ENCODE measurements at regions of chr2 and their contacts with region 1.

Region 1: DNA sequence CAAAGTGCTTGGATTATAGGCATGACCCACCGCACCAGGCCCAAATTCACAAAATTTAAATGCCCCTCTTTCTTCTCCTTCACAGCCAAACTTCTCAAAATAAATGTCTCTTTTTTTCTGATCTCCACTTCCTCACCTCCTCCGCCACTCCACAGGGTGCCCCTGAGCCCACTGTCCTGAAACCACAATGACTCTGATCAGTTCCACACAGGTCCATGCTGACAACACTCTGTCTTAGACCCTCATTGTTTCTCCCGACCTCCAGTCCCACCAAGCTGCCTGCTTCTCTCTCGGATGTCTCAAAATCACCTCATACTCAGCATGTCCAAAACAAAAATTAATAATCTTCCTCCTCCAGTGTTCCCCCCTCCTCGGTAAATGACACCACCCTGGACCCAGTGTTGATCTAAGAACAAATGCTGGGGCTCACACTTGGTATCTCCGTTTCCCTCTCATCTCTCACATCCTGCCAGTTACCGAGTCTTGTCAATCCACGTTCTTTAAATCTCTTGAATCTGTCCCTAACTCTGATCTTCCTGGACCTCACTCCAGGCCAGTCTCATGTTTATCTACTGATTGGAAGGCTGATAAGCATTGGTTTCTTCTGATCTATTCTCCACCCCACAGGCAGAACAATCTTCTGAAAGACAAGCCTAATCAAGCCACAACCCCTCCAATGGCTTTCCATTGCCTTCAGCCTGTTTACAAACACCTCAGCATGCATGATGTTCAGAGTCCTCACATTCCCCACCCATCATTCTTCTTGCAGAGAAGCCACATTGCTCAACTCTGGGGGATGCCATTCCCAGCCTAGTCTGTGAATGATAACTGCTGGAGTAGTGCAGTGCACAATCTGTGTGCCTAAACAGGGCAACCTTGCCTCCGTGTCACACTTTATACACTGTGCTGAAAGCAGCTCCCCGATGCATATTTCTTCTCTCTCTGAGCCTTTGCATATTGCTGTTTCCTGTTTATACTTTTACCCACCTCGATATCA is 12.4 kb upstream of the ANKRD44 start:
- DNase-seq: no peak
- ATAC-seq: peak; percentile 52
- H3K4me3 ChIP-seq: peak overlapping the region; percentile 32; the same call in 1 of the 2 replicates
- H3K27ac ChIP-seq: 0 out of 2 replicates have a peak overlapping the region, but pooled peaks have one; percentile 7
- H3K4me1 ChIP-seq: peaks cover 18% of the 10 kb centered on the region; the same call in 1 of the 2 replicates
- H3K27me3 ChIP-seq: no peaks in the 10 kb centered on the region
- CTCF ChIP-seq: no peak
- EP300 ChIP-seq: no peak
- POLR2A ChIP-seq: peak; percentile 51
- RAD21 ChIP-seq: no peak

Region 2: GRCh38 chr2:197360744-197361156 is 37.7 kb after region 1 on chr2:
- CTCF ChIA-PET with region 1: no interaction called
- POLR2A ChIA-PET with region 1: interaction called, 4 read pairs
- RAD21 ChIA-PET with region 1: no interaction called
- SMC1A ChIA-PET with region 1: interaction called, 4 read pairs
- in situ Hi-C with region 1: no loop called
- intact Hi-C with region 1: loop called (anchors 5 kb)
- DNase-seq: no peak
- ATAC-seq: peak; percentile 89
- H3K4me3 ChIP-seq: no peak overlapping the region
- H3K27ac ChIP-seq: no peak overlapping the region
- H3K4me1 ChIP-seq: no peaks in the 10 kb centered on the region
- H3K27me3 ChIP-seq: no peaks in the 10 kb centered on the region
- CTCF ChIP-seq: no peak
- EP300 ChIP-seq: peak in 1 of 2 experiments; percentile 38; a peak in 1 of 4 replicates
- POLR2A ChIP-seq: no peak
- RAD21 ChIP-seq: no peak

Region 3: GRCh38 chr2:197992482-197993133 is 669.6 kb after region 1 on chr2:
- CTCF ChIA-PET with region 1: no interaction called
- POLR2A ChIA-PET with region 1: no interaction called
- RAD21 ChIA-PET with region 1: no interaction called
- SMC1A ChIA-PET with region 1: no interaction called
- in situ Hi-C with region 1: no loop called
- intact Hi-C with region 1: no loop called
- DNase-seq: no peak
- ATAC-seq: peak; percentile 98
- H3K4me3 ChIP-seq: no peak overlapping the region
- H3K27ac ChIP-seq: peak overlapping the region; percentile 43; the same call in 1 of the 2 replicates
- H3K4me1 ChIP-seq: peaks cover 16% of the 10 kb centered on the region
- H3K27me3 ChIP-seq: no peaks in the 10 kb centered on the region
- CTCF ChIP-seq: no peak
- EP300 ChIP-seq: 0 out of 4 replicates have a peak, but pooled peaks of 1 of the 2 experiments have one; percentile 9
- POLR2A ChIP-seq: no peak
- RAD21 ChIP-seq: no peak

Measured in GM12878 (cell line).